Activated CD4-positive, alpha-beta T cell treated with anti-CD3 and anti-CD28 coated beads, Interleukin-2, amount 10 ng/mL, durations not matched to agents 24 days and 14 days (primary cell): ENCODE measurements at regions of chr7 and their contacts with region 1.

Region 1: DNA sequence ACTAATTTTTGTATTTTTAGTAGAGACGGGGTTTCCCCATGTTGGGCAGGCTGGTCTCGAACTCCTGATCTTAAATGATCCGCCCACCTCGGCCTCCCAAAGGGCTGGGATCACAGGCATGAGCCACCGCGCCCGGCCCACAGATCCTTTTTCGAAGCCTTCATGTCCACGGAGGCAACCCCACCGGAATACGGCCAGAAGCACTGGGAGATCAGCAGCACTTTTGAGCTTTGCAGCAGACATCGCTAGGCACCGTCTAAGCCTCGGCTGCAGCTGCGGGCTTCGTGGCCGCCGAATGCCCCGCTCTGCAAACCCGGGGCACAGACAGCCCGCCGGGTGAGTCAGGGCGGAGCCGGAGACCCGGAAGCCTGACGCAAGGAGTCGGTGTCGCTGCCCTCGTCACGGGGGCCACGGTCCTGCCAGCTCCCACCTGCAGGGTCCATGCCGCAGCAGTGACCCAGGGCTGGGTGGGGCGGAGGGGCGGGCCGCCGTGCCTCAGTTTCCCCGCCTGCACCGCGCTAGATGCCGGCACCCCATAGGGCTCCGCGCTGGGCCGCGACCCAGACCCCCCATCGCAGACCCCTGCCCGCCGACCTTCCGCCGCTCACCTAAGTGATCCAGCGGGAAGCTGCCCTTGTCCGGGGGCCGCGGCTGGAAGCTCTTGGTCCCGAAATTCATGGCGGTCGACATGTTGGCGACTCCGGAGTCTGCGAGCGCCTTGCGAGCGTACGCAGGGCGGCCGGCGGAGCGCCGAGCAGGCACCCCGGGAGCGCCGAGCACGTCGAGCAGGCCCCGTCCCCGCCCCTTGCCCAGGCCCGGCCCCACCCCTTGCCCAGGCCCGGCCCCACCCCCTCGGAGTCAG is at the start of gene COX19:
- DNase-seq: peak; percentile 96
- H3K4me3 Mint-ChIP-seq: peak within 1 kb of the TSS; percentile 95
- H3K27ac Mint-ChIP-seq: peak within 1 kb of the TSS; percentile 93
- H3K4me1 Mint-ChIP-seq: peaks cover 13% of the 10 kb centered on the region
- H3K27me3 Mint-ChIP-seq: no peaks in the 10 kb centered on the region
- total RNA-seq, gene COX19: 15.3 and 22.4 TPM in 2 replicates

Region 2: DNA sequence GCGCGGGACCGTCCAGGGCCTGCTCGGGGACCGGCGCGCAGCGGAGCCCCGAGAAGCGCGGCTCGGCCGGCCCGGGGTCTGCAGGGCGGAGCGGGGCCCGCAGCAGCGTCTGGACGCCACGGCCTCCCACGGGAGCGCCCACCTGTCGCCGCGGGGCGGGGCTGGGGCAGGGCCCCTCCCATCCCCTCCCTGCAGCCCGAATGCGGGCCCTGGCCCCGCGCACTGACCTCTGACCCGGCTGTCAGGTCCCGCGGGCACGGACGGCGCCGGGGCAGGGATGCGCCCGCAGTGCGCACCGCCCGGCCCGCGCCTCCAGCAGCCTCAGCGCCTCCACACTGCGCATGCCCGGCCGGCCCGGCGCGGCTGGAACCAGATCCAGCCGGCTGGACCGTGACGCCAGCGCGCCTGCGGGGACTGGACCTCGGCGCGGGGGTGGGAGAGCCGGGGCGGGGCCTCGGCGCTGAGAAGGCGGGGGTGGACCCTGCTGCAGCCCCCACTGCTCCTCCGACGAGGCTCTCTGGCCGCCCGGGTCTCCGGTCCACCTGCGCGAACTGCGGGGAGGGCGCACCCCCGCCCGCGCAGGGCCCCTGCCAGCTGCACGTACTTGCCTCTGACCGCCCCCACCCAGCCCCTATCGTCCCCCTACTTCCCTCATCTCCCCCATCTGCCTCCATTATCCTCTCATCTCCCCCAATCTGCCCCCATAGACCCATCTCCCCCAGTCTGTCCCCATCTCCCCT is 53.1 kb after region 1 on chr7:
- intact Hi-C with region 1: loop called (anchors 1 kb)
- DNase-seq: peak; percentile 96
- H3K4me3 Mint-ChIP-seq: peak overlapping the region; percentile 77
- H3K27ac Mint-ChIP-seq: peak overlapping the region; percentile 88
- H3K4me1 Mint-ChIP-seq: peaks cover 17% of the 10 kb centered on the region
- H3K27me3 Mint-ChIP-seq: no peaks in the 10 kb centered on the region